ENCODE measurements at regions of chr2 and their contacts with region 1.

Region 1: DNA sequence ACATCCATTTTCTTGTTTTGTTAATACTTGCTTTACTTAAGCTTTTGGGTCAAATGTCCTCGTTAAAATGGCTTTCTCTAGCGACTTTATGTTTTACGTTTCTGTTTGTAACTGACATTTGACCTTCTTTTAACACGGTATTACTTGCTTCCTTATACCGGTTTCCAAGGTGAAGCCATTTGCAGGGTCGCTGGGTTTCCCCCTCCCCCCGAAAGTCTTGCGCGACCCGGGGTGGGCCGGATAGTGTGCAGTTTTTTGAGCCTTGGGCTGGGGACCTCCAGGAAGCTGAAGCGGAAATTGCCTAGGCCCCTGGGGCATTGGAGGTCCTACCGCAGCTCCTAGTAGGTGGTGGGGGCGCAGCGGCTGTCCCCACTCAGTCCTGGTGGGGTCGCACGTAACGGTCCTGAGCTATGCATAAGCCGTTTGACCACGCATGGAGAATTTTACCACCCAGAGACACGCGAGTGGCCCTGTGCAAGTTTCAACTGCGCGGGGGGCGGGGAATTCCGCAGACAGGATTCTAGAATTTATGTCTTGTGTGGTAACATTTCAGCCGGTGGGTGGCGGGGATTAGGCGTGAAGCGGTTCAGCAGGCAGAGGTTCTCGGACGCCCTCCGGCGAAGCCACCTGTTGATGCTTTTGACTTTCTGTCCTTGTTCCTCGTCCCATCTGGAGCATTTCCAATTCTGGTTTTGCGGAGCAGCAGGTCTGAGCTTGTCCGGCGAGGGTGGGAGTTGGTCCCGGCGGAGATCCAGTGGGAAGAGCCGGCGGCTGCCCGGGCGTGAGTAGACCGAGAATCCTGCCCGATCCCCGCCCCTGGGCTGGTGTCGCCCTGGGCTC is 2.4 kb downstream of the CFLAR start:
- DNase-seq: peak; percentile 75 to 94 (median 78)
- H3K4me3 ChIP-seq: peak overlapping the region; percentile 78 to 98
- H3K4me3 Mint-ChIP-seq: peak overlapping the region; percentile 93 to 100 (median 100)
- H3K27ac ChIP-seq: peak overlapping the region; percentile 91
- H3K27ac Mint-ChIP-seq: peak overlapping the region; percentile 92 to 100 (median 99)
- H3K4me1 ChIP-seq: peaks cover 55% of the 10 kb centered on the region
- H3K4me1 Mint-ChIP-seq: peaks cover 34 to 87% (median 47%) of the 10 kb centered on the region in 4 donors
- H3K27me3 ChIP-seq: no peaks in the 10 kb centered on the region
- H3K27me3 Mint-ChIP-seq: peaks cover 0 to 2% of the 10 kb centered on the region in 2 donors

Region 2: GRCh38 chr2:200864176-200864976 is 254.0 kb before region 1 on chr2 and contains the start of gene CLK1:
- CTCF ChIA-PET with region 1: no interaction called
- POLR2A ChIA-PET with region 1: interaction called, 85 read pairs
- intact Hi-C with region 1: loop called (anchors 1 kb)
- DNase-seq: peak; percentile 93 to 97 (median 94)
- H3K4me3 ChIP-seq: peak within 1 kb of the TSS; percentile 83 to 100
- H3K4me3 Mint-ChIP-seq: peak within 1 kb of the TSS; percentile 91 to 99 (median 96)
- H3K27ac ChIP-seq: peak within 1 kb of the TSS; percentile 100
- H3K27ac Mint-ChIP-seq: peak within 1 kb of the TSS; percentile 89 to 100 (median 100)
- H3K4me1 ChIP-seq: peaks cover 47% of the 10 kb centered on the region
- H3K4me1 Mint-ChIP-seq: peaks cover 28 to 59% (median 41%) of the 10 kb centered on the region in 4 donors
- H3K27me3 ChIP-seq: no peaks in the 10 kb centered on the region
- H3K27me3 Mint-ChIP-seq: no peaks in the 10 kb centered on the region
- total RNA-seq, gene CLK1: 472 to 499 TPM

Region 3: DNA sequence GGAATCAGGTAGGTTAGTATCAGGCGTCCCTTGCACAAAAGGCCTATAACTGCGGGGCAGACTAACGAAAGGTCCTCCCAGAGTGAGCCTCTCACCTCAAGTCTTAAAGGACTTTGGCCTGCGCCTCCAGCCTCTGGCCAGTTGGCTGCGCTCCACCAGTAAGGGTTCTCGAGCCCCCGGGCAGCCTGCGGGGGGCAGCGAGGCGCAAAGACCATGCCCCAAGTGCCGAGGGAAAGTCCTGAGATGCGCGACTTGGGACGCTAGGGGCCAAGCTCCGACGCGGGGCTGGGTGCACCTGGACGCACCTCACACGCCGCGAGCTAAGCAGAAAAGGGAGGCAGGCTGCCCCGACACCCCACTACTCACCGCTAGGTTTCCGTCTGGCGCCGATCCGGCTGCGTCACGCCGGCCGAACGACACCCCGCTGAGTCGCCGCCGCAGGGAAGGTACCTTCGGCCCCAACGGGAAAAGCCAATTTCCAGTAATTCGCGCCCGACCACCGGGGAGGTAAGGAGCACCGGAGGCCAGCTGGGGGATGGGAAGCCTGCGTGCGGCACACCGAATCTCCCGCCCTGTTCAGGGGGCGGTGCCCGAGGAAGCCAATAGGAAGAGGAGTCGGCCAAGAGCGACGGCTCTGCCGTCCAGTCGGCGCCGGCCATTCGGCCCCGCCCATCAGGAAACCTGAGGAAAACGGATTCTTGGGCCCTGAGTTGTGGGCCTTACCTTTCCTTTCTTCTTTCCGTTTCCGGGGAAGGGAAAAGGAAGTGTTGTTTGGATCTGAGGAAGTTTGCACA is 155.0 kb before region 1 on chr2 and contains the start of gene ORC2:
- CTCF ChIA-PET with region 1: interaction called, 14 read pairs
- POLR2A ChIA-PET with region 1: interaction called, 53 read pairs
- intact Hi-C with region 1: loop called (anchors 2 kb)
- DNase-seq: peak; percentile 93 to 97 (median 94)
- H3K4me3 ChIP-seq: peak within 1 kb of the TSS; percentile 87 to 95
- H3K4me3 Mint-ChIP-seq: peak within 1 kb of the TSS; percentile 96 to 99 (median 98)
- H3K27ac ChIP-seq: peak within 1 kb of the TSS; percentile 79
- H3K27ac Mint-ChIP-seq: peak within 1 kb of the TSS; percentile 98 to 100 (median 99)
- H3K4me1 ChIP-seq: peaks cover 47% of the 10 kb centered on the region
- H3K4me1 Mint-ChIP-seq: peaks cover 35 to 73% (median 56%) of the 10 kb centered on the region in 4 donors
- H3K27me3 ChIP-seq: no peaks in the 10 kb centered on the region
- H3K27me3 Mint-ChIP-seq: no peaks in the 10 kb centered on the region
- total RNA-seq, gene ORC2: 72.2 to 76.4 TPM

Region 4: DNA sequence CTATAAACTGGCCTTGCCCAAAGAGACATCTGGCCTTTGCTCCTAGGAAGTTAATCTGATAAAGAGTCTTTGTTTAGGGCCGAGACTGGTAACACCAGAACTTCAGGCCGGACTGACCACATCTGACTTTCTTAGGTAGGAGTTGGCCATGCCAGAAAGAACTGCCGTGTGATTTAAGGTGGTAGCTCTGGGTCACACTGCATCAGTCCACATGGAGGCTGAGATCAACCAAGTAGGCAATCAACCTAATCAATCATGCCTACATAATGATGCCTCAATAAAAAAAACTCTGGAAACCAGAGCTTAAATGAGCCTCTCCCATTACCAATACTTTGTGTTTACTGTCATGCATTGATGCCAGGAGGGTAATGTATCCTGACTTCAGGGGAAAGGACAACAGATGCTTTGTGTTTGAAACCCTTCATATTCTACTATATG is 110.8 kb before region 1 on chr2:
- CTCF ChIA-PET with region 1: no interaction called
- POLR2A ChIA-PET with region 1: no interaction called
- intact Hi-C with region 1: no loop called
- DNase-seq: no peak
- H3K4me3 ChIP-seq: no peak overlapping the region
- H3K4me3 Mint-ChIP-seq: no peak overlapping the region
- H3K27ac ChIP-seq: no peak overlapping the region
- H3K27ac Mint-ChIP-seq: peak overlapping the region in 1 of 7 donors; percentile 51
- H3K4me1 ChIP-seq: no peaks in the 10 kb centered on the region
- H3K4me1 Mint-ChIP-seq: no peaks in the 10 kb centered on the region
- H3K27me3 ChIP-seq: no peaks in the 10 kb centered on the region
- H3K27me3 Mint-ChIP-seq: no peaks in the 10 kb centered on the region

Region 5: DNA sequence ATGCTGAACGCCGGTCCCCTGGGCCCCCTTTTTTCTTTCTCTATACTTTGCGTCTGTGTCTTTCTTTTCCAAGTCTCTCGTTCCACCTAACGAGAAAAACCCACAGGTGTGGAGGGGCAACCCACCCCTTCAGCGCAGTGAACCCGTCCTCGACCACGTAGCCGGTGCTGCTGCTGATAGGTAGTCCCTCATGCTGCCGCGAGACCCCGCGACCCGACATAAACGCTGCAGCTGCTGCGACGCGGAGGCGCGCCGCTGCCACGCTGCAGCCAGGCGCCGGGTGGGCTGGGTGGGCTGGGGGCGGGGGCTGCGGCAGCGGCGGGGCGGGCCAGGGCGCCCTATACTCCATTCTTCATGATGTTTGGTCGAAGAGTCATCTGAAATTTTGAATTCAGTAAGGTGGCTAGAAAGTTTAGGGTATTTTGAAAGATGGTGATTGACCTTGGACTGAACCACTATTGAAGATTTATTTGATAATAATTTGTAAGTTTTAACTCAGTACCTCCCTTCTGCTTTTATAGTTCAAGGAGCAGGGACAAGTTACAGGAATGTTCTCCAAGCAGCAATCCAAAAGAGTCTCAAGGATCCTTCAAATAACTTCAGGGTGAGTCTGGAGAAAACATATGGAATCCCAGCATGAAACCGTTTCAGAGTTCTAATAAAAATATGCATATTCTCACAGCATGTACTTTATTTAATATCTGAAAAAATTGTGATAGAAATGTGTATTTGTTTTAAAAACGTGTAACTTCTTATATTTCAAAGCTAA is 21.7 kb after region 1 on chr2:
- CTCF ChIA-PET with region 1: interaction called, 28 read pairs
- POLR2A ChIA-PET with region 1: interaction called, 84 read pairs
- intact Hi-C with region 1: no loop called
- DNase-seq: no peak
- H3K4me3 ChIP-seq: no peak overlapping the region
- H3K4me3 Mint-ChIP-seq: no peak overlapping the region
- H3K27ac ChIP-seq: no peak overlapping the region
- H3K27ac Mint-ChIP-seq: peak overlapping the region in 6 of 7 donors; percentile 27 to 79 (median 68)
- H3K4me1 ChIP-seq: peaks cover 13% of the 10 kb centered on the region
- H3K4me1 Mint-ChIP-seq: peaks cover 20 to 38% (median 29%) of the 10 kb centered on the region in 4 donors
- H3K27me3 ChIP-seq: no peaks in the 10 kb centered on the region
- H3K27me3 Mint-ChIP-seq: no peaks in the 10 kb centered on the region

Region 6: DNA sequence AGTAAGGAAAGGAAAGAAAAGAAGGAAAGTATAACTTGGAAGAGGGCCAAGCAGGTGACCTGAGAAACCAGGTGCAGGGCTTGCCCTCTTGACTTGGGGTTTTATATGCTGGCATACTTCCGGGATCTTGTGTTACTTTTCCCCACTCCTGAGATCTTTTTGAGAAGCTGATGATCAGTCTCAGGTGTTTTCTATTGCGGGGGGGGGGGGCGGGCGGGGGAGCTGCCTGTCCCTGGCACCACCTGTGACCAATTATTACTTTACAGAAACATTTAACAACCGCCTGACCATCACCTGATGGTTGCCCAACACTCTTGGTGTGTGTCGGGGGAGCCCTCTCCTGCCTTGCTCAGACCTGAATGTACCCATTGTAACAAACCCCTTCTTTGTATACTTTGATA is 57.7 kb after region 1 on chr2:
- CTCF ChIA-PET with region 1: interaction called, 9 read pairs
- POLR2A ChIA-PET with region 1: interaction called, 31 read pairs
- intact Hi-C with region 1: loop called (anchors 5 kb)
- DNase-seq: no peak
- H3K4me3 ChIP-seq: no peak overlapping the region
- H3K4me3 Mint-ChIP-seq: no peak overlapping the region
- H3K27ac ChIP-seq: no peak overlapping the region
- H3K27ac Mint-ChIP-seq: peak overlapping the region in 1 of 7 donors; percentile 4
- H3K4me1 ChIP-seq: peaks cover 7% of the 10 kb centered on the region
- H3K4me1 Mint-ChIP-seq: peaks cover 8 to 26% (median 12%) of the 10 kb centered on the region in 4 donors
- H3K27me3 ChIP-seq: no peaks in the 10 kb centered on the region
- H3K27me3 Mint-ChIP-seq: no peaks in the 10 kb centered on the region

Region 7: DNA sequence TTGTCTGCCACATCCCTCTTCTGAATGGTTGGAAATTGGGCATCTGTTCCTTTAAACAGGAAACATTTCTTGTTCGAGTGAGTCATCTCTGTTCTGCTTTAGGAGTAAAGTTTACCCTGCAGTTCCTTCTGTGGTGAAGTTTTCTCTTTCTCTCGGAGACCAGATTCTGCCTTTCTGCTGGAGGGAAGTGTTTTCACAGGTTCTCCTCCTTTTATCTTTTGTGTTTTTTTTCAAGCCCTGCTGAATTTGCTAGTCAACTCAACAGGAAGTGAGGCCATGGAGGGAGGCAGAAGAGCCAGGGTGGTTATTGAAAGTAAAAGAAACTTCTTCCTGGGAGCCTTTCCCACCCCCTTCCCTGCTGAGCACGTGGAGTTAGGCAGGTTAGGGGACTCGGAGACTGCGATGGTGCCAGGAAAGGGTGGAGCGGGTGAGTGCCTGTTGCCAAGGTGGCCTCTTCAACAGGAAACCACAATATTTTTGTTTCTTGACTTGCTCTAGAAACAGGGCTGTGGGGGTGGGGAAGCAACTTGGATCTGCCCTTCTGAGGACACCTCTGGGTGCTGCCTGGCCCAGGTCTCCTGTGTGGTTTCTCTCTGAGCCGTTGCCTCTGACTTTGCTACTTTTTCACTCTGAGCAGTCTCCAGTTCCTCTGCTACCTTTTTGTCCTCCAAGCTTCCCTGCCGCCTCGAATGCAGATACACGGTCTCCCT is 139.8 kb after region 1 on chr2:
- CTCF ChIA-PET with region 1: no interaction called
- POLR2A ChIA-PET with region 1: interaction called, 61 read pairs
- intact Hi-C with region 1: loop called (anchors 1 kb)
- DNase-seq: peak; percentile 95 to 99 (median 98)
- H3K4me3 ChIP-seq: peak overlapping the region; percentile 57 to 58
- H3K4me3 Mint-ChIP-seq: peak overlapping the region; percentile 89 to 93 (median 92)
- H3K27ac ChIP-seq: peak overlapping the region; percentile 86
- H3K27ac Mint-ChIP-seq: peak overlapping the region; percentile 95 to 100 (median 99)
- H3K4me1 ChIP-seq: peaks cover 79% of the 10 kb centered on the region
- H3K4me1 Mint-ChIP-seq: peaks cover 40 to 81% (median 61%) of the 10 kb centered on the region in 4 donors
- H3K27me3 ChIP-seq: no peaks in the 10 kb centered on the region
- H3K27me3 Mint-ChIP-seq: no peaks in the 10 kb centered on the region